T-cell (primary cell): ENCODE measurements at regions of chr3 and their contacts with region 1.

Region 1: DNA sequence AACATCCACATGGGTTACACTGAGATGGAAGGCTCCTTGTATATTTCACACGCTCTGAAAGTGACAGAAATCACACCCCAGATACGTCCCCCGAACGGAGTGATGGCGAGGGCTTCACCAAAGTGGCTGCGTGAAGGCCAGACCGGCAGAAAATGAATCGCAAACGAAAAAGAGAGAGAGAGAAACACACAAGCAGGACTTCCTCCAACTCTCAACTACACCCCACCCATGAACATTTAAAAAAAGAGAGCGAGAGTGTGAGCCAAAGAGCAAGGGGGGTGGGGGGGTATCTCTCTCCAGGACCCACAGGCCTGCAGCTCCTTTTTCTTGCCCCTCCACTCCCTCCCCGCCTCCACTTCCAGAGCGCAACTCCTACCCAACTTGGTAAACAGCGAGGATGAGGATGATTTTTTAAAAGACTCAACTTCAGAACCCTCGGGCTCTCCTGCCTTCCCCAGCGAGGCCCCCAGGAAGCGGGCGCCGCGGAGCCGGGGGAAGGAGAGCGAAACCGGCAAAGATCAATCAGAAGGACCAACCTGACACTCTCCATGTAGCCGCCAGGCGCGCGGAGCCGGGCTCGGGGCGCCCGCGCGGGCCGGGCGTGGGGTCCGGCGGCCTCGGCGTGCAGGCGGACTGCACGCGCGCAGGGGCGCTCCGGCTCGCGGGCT is 519.1 kb downstream of the FOXP1 start:
- DNase-seq: peak; percentile 54 to 82 (median 67)
- ATAC-seq: peak; percentile 58 to 63 (median 60)
- H3K4me3 ChIP-seq: peak overlapping the region; percentile 77 to 98
- H3K4me3 Mint-ChIP-seq: no peak overlapping the region
- H3K27ac ChIP-seq: peak overlapping the region; percentile 91
- H3K27ac Mint-ChIP-seq: no peak overlapping the region
- H3K4me1 ChIP-seq: peaks cover 38 to 72% of the 10 kb centered on the region in 2 experiments
- H3K4me1 Mint-ChIP-seq: peaks cover 36 to 67% (median 66%) of the 10 kb centered on the region in 3 donors
- H3K27me3 ChIP-seq: no peaks in the 10 kb centered on the region
- H3K27me3 Mint-ChIP-seq: no peaks in the 10 kb centered on the region

Region 2: DNA sequence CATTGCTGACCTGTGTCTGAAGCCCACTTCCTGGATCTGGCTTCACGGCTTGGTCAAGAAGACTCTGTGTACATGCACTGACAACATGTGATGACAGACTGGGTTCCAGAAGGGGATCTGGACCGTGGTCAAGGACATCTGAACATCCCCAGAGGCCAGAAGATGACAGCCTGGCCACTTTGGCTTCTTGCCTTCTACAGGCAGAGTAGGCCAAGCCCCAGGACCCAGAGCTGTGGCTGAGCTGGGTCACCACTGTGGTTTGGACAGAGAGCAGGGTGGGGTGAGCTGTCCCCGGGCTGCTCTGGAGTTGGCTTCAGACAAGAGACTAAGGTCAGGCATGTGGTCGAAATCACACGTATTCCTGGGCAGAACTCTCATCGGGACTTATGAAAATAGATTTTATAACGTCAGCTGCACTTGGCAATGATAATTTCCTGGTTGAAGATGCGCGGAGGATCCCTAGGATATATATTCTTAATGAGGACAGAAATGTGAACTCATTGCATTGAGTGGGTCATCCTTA is 1564.5 kb before region 1 on chr3:
- CTCF ChIA-PET with region 1: no interaction called
- POLR2A ChIA-PET with region 1: no interaction called
- DNase-seq: no peak
- ATAC-seq: no peak
- H3K4me3 ChIP-seq: no peak overlapping the region
- H3K4me3 Mint-ChIP-seq: no peak overlapping the region
- H3K27ac ChIP-seq: no peak overlapping the region
- H3K27ac Mint-ChIP-seq: no peak overlapping the region
- H3K4me1 ChIP-seq: no peaks in the 10 kb centered on the region
- H3K4me1 Mint-ChIP-seq: no peaks in the 10 kb centered on the region
- H3K27me3 ChIP-seq: peaks cover 0 to 13% of the 10 kb centered on the region in 2 experiments
- H3K27me3 Mint-ChIP-seq: peaks cover 8% of the 10 kb centered on the region in 2 donors

Region 3: DNA sequence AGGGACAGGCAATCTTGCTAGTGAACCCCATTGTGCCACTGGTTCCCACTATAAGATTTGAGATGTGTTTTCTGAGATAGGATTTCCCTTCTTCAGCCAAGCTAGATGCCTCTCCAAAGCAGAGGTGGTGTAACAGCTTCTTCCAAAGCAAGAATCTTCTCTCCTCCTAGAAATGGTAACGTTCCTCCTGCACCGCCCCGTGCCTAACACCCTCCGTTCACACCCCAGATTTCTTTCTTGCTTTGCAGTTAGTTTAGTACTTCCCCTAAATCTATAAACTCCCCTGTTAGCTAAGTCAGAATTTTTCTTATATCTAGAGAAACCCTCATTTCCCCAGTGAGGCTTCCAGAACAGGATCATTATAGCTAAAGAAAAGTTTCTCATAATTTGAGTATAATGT is 134.4 kb before region 1 on chr3:
- CTCF ChIA-PET with region 1: no interaction called
- POLR2A ChIA-PET with region 1: no interaction called
- DNase-seq: no peak
- ATAC-seq: no peak
- H3K4me3 ChIP-seq: no peak overlapping the region
- H3K4me3 Mint-ChIP-seq: no peak overlapping the region
- H3K27ac ChIP-seq: no peak overlapping the region
- H3K27ac Mint-ChIP-seq: no peak overlapping the region
- H3K4me1 ChIP-seq: no peaks in the 10 kb centered on the region
- H3K4me1 Mint-ChIP-seq: peaks cover 0 to 4% (median 3%) of the 10 kb centered on the region in 3 donors
- H3K27me3 ChIP-seq: no peaks in the 10 kb centered on the region
- H3K27me3 Mint-ChIP-seq: peaks cover 0 to 1% of the 10 kb centered on the region in 2 donors

Region 4: DNA sequence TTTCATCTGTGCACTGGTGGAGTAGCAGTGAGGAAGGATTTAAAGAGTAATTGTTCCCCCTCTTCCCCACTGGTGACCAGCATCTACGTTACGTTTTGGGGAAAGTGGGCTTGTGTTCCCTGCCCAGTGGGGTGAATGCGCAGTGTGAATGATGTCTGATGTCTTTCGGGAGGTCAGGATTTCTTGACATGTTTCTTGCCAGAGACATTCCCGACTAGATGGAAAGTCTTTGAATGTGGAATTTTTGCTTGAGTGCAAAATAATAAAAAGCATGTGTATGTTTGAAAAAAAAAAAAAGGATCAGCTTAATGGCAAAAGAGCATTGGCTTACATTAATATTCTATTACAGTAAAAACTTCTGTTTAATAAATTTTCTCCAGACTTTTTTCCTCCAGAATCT is 113.1 kb before region 1 on chr3:
- CTCF ChIA-PET with region 1: no interaction called
- POLR2A ChIA-PET with region 1: interaction called in 1 of 2 experiments, 10 read pairs
- DNase-seq: no peak
- ATAC-seq: no peak
- H3K4me3 ChIP-seq: no peak overlapping the region
- H3K4me3 Mint-ChIP-seq: no peak overlapping the region
- H3K27ac ChIP-seq: no peak overlapping the region
- H3K27ac Mint-ChIP-seq: no peak overlapping the region
- H3K4me1 ChIP-seq: no peaks in the 10 kb centered on the region
- H3K4me1 Mint-ChIP-seq: peaks cover 10 to 12% (median 11%) of the 10 kb centered on the region in 3 donors
- H3K27me3 ChIP-seq: peaks cover 0 to 3% of the 10 kb centered on the region in 2 experiments
- H3K27me3 Mint-ChIP-seq: no peaks in the 10 kb centered on the region

Region 5: DNA sequence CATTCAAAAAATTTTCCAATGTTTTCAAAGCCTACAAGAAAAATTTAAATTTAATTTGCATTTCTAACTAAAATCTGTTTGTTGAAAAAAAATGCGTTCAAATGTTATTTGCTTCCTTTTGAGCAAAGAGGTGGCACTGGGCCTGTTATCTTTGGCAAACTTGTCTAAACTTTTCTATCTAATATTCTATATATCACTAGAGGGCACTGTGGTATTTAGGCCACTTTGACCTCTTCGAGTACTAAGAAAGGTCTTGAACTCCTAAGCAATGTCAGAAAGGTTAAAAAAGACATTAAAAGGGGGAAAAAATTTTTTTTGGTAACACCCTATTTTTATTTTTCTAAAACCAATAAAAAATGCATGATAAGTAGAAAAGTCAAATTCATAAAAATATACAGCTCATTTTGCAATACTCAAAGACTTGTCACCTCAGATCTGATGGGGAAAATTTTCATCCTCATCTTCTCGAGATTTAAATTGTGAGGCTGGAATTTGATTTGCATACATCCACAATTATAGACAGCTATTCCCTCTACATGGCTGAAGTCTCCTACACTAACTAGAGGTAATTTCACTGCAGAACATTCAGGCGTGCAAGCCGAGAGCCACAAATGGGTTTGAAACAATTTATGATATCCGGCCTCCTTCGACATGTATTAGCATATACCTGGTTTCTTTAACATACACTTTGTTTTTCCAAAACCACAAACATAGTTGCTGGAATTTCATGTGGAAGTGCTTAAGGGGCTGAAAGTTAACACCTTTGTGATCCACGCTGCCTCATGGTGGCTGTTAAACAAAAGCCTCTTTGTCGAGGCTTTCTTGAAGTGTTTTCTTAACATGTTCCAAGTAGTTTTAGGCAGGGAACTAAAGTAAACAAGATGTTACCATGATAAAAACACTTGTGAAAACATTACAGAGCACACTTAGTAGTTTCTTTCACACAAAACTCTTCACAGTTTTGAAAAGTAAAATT is 57.3 kb before region 1 on chr3:
- CTCF ChIA-PET with region 1: interaction called, 6 to 11 read pairs
- POLR2A ChIA-PET with region 1: interaction called, 4 to 5 read pairs
- DNase-seq: peak in 1 of 35 experiments; percentile 61
- ATAC-seq: peak in 1 of 4 experiments; percentile 39
- H3K4me3 ChIP-seq: no peak overlapping the region
- H3K4me3 Mint-ChIP-seq: peak overlapping the region in 2 of 3 donors; percentile 20 to 31
- H3K27ac ChIP-seq: peak overlapping the region; percentile 19
- H3K27ac Mint-ChIP-seq: peak overlapping the region; percentile 66 to 85
- H3K4me1 ChIP-seq: peaks cover 31 to 42% of the 10 kb centered on the region in 2 experiments
- H3K4me1 Mint-ChIP-seq: peaks cover 62 to 84% (median 77%) of the 10 kb centered on the region in 3 donors
- H3K27me3 ChIP-seq: no peaks in the 10 kb centered on the region
- H3K27me3 Mint-ChIP-seq: no peaks in the 10 kb centered on the region

Region 6: DNA sequence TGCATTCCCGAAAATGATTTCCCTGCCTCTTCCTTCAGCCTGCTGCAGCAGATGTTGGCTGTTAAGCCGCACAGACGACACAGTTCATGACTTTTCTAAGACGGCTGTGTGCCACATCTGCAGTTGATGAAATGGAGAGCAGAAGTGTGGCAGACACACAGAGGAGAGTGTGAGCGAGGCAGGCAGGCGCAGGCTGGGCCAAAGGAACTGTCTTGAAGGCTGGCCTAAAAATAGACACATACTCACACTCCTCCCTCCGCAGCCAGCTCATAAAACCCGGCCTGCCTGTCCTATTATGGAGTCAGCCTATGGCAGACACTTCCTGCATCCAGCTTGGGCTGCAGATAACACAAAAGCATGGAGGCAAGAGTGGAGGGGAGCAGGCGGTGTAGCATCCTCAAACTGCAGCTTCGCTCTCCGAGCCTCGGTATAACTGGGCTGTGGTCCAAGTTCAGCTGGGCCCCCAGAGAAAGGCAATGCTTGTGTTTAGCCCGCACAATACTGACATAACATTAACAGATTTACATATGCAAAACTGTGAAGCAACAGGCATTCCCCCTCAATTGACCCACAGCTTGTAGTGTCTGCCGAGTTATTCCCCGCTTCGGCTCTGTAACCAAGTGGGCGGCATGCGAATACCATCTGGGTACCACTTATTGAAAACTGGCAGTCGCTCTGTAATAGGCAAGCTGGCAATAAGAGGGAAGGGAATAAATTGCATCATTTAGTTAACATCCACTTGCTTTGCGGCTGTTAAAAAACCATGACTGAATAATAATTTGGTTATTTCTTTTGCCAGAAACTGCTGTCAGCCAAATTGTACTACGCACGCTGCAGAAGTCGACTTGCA is 478.3 kb after region 1 on chr3:
- CTCF ChIA-PET with region 1: no interaction called
- POLR2A ChIA-PET with region 1: no interaction called
- DNase-seq: peak in 5 of 35 experiments; percentile 0 to 32 (median 4)
- ATAC-seq: peak in 3 of 4 experiments; percentile 33 to 49 (median 40)
- H3K4me3 ChIP-seq: no peak overlapping the region
- H3K4me3 Mint-ChIP-seq: peak overlapping the region in 1 of 3 donors; percentile 16
- H3K27ac ChIP-seq: no peak overlapping the region
- H3K27ac Mint-ChIP-seq: peak overlapping the region in 1 of 2 donors; percentile 6
- H3K4me1 ChIP-seq: peaks cover 9 to 10% of the 10 kb centered on the region in 2 experiments
- H3K4me1 Mint-ChIP-seq: peaks cover 5 to 8% (median 6%) of the 10 kb centered on the region in 3 donors
- H3K27me3 ChIP-seq: no peaks in the 10 kb centered on the region
- H3K27me3 Mint-ChIP-seq: no peaks in the 10 kb centered on the region